MCF 10A (cell line): ENCODE measurements at regions of chr12 and their contacts with region 1.

Region 1: GRCh38 chr12:18242380-18243089 is 18.8 kb upstream of the PIK3C2G start:
- DNase-seq: no peak
- H3K4me3 Mint-ChIP-seq: no peak overlapping the region
- H3K27ac Mint-ChIP-seq: no peak overlapping the region
- H3K4me1 Mint-ChIP-seq: no peaks in the 10 kb centered on the region
- H3K27me3 Mint-ChIP-seq: no peaks in the 10 kb centered on the region
- CTCF ChIP-seq: no peak

Region 2: DNA sequence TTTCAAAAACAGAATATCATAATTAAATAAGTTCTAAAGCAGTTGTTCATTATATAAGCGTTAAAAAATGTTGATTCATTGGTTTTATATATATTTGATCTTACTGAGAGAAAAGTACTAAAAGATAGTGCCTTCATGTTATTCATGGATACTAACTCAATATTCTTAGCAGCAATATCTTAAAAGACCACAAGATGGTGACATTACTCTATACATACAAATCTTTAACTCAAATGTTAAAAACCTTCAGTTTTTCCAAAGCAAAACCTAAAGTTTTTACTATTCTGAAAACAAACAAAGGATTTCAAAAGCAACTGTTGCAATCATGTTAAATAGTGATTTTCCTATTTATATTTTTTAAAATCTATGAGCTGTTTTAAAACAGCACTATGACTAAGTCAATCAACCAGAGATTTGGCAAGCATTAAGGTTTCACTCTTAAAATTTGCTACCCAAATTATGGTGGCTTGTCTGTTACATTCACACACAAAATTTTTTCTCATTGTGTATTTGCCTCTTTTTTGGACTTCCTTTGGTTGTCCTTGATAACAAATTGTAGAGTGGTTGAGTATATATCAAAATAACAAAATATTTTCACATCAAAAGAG is 102.4 kb before region 1 on chr12:
- CTCF ChIA-PET with region 1: interaction called, 10 read pairs
- POLR2A ChIA-PET with region 1: no interaction called
- intact Hi-C with region 1: no loop called
- DNase-seq: peak; percentile 45
- H3K4me3 Mint-ChIP-seq: no peak overlapping the region
- H3K27ac Mint-ChIP-seq: no peak overlapping the region
- H3K4me1 Mint-ChIP-seq: peaks cover 17% of the 10 kb centered on the region
- H3K27me3 Mint-ChIP-seq: no peaks in the 10 kb centered on the region
- CTCF ChIP-seq: peak; percentile 69

Region 3: GRCh38 chr12:18345021-18345735 is 102.6 kb after region 1 on chr12:
- CTCF ChIA-PET with region 1: no interaction called
- POLR2A ChIA-PET with region 1: no interaction called
- intact Hi-C with region 1: no loop called
- DNase-seq: no peak
- H3K4me3 Mint-ChIP-seq: no peak overlapping the region
- H3K27ac Mint-ChIP-seq: no peak overlapping the region
- H3K4me1 Mint-ChIP-seq: peaks cover 6% of the 10 kb centered on the region
- H3K27me3 Mint-ChIP-seq: no peaks in the 10 kb centered on the region
- CTCF ChIP-seq: no peak

Region 4: DNA sequence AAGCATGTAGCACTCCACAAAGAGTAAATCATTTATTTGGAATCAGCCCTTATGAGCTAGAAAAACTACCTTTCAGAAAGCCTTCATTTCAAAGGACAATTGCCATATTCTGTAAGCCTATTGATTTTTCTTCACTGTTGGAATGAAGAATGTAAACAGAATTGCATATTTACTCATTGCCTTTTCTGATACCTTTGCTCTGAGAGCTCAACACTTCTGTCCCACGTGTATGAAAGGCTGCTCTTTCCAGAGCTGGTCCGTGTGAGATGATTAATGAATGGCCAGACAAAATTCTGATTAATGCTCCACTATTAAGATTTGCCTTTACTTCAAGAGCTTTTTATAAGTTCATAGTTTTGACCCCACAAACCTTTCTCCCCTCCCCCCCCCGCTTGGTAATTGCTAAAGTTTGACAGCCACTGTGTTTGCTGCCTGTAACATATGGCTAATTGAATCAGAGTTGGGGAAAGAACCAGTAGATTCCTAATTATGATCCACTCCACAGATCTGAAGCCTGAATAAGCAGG is 824.0 kb after region 1 on chr12:
- CTCF ChIA-PET with region 1: interaction called, 10 read pairs
- POLR2A ChIA-PET with region 1: no interaction called
- intact Hi-C with region 1: no loop called
- DNase-seq: no peak
- H3K4me3 Mint-ChIP-seq: no peak overlapping the region
- H3K27ac Mint-ChIP-seq: no peak overlapping the region
- H3K4me1 Mint-ChIP-seq: no peaks in the 10 kb centered on the region
- H3K27me3 Mint-ChIP-seq: no peaks in the 10 kb centered on the region
- CTCF ChIP-seq: no peak